Prostate gland (tissue), 2 donors: ENCODE measurements at regions of chr5 and their contacts with region 1.

Region 1: GRCh38 chr5:175718401-175719108 is 60.7 kb downstream of the HRH2 start:
- DNase-seq: peak; percentile 27
- H3K4me3 ChIP-seq: no peak overlapping the region
- H3K27ac ChIP-seq: no peak overlapping the region
- H3K4me1 ChIP-seq: no peaks in the 10 kb centered on the region
- H3K27me3 ChIP-seq: no peaks in the 10 kb centered on the region
- CTCF ChIP-seq: peak; percentile 41 to 91 (median 70)
- POLR2A ChIP-seq: no peak

Region 2: DNA sequence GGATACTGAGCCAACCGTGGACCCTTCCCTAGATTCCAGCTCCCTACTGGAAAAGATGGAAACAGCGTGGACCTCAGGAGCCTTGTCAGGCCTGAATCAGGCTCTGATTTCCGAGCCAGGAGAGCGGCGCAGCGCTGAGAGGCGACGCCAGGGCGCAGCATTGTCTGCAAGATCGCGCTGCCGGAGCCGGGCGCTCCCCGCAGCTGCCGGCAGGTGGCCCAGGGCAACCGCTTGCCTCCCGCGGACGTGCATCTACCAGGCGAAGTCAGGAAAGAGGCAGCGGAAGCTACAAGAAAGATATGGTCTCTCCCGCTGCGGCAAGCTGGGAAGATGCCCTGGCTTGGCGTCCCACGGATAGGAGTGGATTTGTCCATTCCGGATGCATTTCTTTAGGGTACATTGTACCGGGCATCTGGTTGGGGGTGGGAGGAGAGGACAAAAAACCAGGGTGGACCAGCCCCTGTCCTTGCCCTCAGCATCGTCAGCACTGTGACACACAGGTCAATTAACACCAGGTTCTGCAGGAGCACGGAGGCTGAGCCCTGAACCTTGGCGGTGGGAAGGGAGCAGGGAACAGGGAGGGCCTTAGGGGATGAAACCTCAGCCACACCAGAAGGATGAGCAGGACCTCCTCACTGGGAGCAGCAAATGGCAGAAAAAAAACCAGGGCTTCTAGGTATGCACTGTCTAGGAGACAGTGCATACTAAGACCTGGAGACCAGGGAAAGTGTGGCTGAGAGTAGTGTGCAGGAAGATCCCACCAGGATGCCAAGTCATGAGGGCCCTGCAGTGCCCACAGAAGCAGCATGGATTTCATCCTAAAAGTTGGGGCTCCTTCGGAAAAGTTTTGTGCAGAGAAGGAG is 184.3 kb before region 1 on chr5:
- intact Hi-C with region 1: loop called (anchors 1 kb)
- DNase-seq: peak; percentile 56
- H3K4me3 ChIP-seq: no peak overlapping the region
- H3K27ac ChIP-seq: no peak overlapping the region
- H3K4me1 ChIP-seq: no peaks in the 10 kb centered on the region
- H3K27me3 ChIP-seq: no peaks in the 10 kb centered on the region
- CTCF ChIP-seq: peak; percentile 38 to 98 (median 92)
- POLR2A ChIP-seq: no peak